A673 (cell line): ENCODE measurements at regions of chr20 and their contacts with region 1.

Region 1: GRCh38 chr20:4956200-4956810 is 45.0 kb downstream of the SLC23A2 start:
- DNase-seq: peak; percentile 71
- H3K4me3 ChIP-seq: no peak overlapping the region
- H3K27ac ChIP-seq: no peak overlapping the region
- H3K4me1 ChIP-seq: peaks cover 4% of the 10 kb centered on the region
- H3K27me3 ChIP-seq: no peaks in the 10 kb centered on the region
- CTCF ChIP-seq: peak; percentile 82

Region 2: GRCh38 chr20:4869290-4870193 is 86.8 kb before region 1 on chr20:
- CTCF ChIA-PET with region 1: no interaction called
- POLR2A ChIA-PET with region 1: no interaction called
- intact Hi-C with region 1: no loop called
- DNase-seq: no peak
- H3K4me3 ChIP-seq: no peak overlapping the region
- H3K27ac ChIP-seq: no peak overlapping the region
- H3K4me1 ChIP-seq: no peaks in the 10 kb centered on the region
- H3K27me3 ChIP-seq: no peaks in the 10 kb centered on the region
- CTCF ChIP-seq: no peak

Region 3: GRCh38 chr20:5448449-5449118 is 492.3 kb after region 1 on chr20:
- CTCF ChIA-PET with region 1: interaction called, 11 read pairs
- POLR2A ChIA-PET with region 1: no interaction called
- intact Hi-C with region 1: no loop called
- DNase-seq: peak; percentile 60
- H3K4me3 ChIP-seq: no peak overlapping the region
- H3K27ac ChIP-seq: no peak overlapping the region
- H3K4me1 ChIP-seq: no peaks in the 10 kb centered on the region
- H3K27me3 ChIP-seq: peaks cover 42% of the 10 kb centered on the region
- CTCF ChIP-seq: peak; percentile 80